K562 (cell line): ENCODE measurements at regions of chr3 and their contacts with region 1.

Region 1: GRCh38 chr3:140941434-140942220 is at the start of gene SLC25A36:
- DNase-seq: peak; percentile 93 to 99 (median 94)
- ATAC-seq: peak; percentile 97
- H3K4me3 ChIP-seq: peak within 1 kb of the TSS; percentile 92
- H3K27ac ChIP-seq: peak within 1 kb of the TSS; percentile 93
- H3K4me1 ChIP-seq: peaks cover 4 to 7% of the 10 kb centered on the region in 2 experiments
- H3K27me3 ChIP-seq: no peaks in the 10 kb centered on the region
- CTCF ChIP-seq: no peak; a peak in 1 of 6 replicates
- EP300 ChIP-seq: no peak; the same call in none of the 2 replicates
- POLR2A ChIP-seq: peak; percentile 93
- RAD21 ChIP-seq: no peak
- polyA plus RNA-seq, gene SLC25A36: 12.0 to 15.3 TPM

Region 2: GRCh38 chr3:140953028-140953960 is 11.7 kb after region 1 on chr3:
- CTCF ChIA-PET with region 1: no interaction called
- POLR2A ChIA-PET with region 1: interaction called, 32 read pairs
- in situ Hi-C with region 1: no loop called
- intact Hi-C with region 1: no loop called
- DNase-seq: peak; percentile 26 to 65 (median 46)
- ATAC-seq: peak; percentile 92
- H3K4me3 ChIP-seq: no peak overlapping the region; the same call in 1 of the 2 replicates
- H3K27ac ChIP-seq: peak overlapping the region; percentile 62
- H3K4me1 ChIP-seq: peaks cover 10 to 32% of the 10 kb centered on the region in 2 experiments
- H3K27me3 ChIP-seq: no peaks in the 10 kb centered on the region
- CTCF ChIP-seq: no peak
- EP300 ChIP-seq: no peak; the same call in 1 of the 2 replicates
- POLR2A ChIP-seq: no peak
- RAD21 ChIP-seq: no peak

Region 3: GRCh38 chr3:141076797-141077571 is 135.4 kb after region 1 on chr3:
- CTCF ChIA-PET with region 1: no interaction called
- POLR2A ChIA-PET with region 1: no interaction called
- in situ Hi-C with region 1: no loop called
- intact Hi-C with region 1: no loop called
- DNase-seq: no peak
- ATAC-seq: no peak; the same call in 2 of the 3 replicates
- H3K4me3 ChIP-seq: no peak overlapping the region
- H3K27ac ChIP-seq: no peak overlapping the region
- H3K4me1 ChIP-seq: no peaks in the 10 kb centered on the region; a peak in 1 of 5 replicates
- H3K27me3 ChIP-seq: peaks cover 35 to 69% of the 10 kb centered on the region in 2 experiments
- CTCF ChIP-seq: no peak
- EP300 ChIP-seq: no peak
- POLR2A ChIP-seq: no peak
- RAD21 ChIP-seq: no peak